PC-9 (cell line): ENCODE measurements at regions of chr22 and their contacts with region 1.

Region 1: DNA sequence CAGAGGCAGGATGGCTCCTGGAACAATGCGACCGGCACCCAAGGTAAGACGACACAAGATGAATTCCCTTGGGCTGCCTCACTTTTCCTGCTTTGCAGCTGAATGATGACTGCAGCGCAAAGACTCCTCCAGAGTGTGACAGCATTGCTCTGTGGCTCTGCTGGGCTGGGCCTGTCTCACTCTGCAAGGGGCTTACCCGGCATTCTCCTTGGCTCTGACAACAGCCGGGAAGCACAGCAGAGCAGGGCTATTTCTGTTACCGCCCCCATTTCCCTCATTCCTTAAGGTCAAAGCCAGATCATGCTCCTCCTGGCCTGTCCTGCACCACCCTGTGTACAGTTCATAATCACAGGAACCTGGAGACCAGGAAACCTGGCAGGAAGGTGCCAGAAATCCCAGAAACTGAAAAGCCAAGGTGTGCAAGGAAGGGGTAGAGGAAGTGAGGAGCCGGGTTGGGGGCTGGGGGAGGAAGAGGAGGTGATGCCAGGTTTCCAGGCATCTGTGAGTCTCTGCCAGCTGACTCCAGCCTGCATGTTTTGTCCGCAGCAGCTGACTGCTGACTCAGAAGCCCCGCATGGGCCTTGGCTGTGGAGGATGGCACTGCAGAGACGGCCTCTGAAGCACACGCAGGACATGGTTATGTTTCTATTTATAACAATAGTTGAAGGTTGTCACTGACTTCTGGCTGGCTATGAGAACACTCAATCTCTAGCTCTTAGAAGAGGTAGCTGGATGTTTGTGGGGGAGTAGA is 113.6 kb downstream of the MICAL3 start:
- DNase-seq: no peak
- H3K4me3 ChIP-seq: no peak overlapping the region
- H3K27ac ChIP-seq: no peak overlapping the region
- H3K4me1 ChIP-seq: no peaks in the 10 kb centered on the region
- H3K27me3 ChIP-seq: no peaks in the 10 kb centered on the region
- CTCF ChIP-seq: no peak

Region 2: DNA sequence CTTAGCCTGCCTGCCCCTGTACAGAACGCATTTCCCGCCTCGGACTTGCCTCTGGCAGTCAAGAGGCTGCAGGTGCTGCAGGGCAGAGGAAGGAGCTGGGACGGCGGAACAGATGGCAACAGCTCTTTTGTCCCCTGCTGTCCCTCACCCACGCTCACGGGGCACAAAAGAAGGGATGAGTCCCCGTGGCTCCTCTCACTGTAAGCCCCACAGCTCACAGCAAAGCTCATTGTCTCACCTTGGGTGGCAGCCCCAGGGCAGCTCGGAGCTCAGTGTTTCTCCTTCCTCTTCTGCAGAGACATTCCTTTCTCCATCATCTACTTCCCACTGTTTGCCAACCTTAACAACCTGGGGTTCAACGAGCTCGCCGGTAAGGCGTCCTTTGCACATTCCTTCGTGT is 323.1 kb before region 1 on chr22:
- CTCF ChIA-PET with region 1: no interaction called
- POLR2A ChIA-PET with region 1: interaction called, 13 read pairs
- intact Hi-C with region 1: no loop called
- DNase-seq: no peak
- H3K4me3 ChIP-seq: no peak overlapping the region
- H3K27ac ChIP-seq: no peak overlapping the region
- H3K4me1 ChIP-seq: no peaks in the 10 kb centered on the region
- H3K27me3 ChIP-seq: no peaks in the 10 kb centered on the region
- CTCF ChIP-seq: no peak

Region 3: GRCh38 chr22:17969701-17970113 is 59.0 kb after region 1 on chr22:
- CTCF ChIA-PET with region 1: no interaction called
- POLR2A ChIA-PET with region 1: no interaction called
- intact Hi-C with region 1: loop called (anchors 10 kb)
- DNase-seq: peak; percentile 45 to 65
- H3K4me3 ChIP-seq: no peak overlapping the region
- H3K27ac ChIP-seq: peak overlapping the region; percentile 9; the same call in 1 of the 2 replicates
- H3K4me1 ChIP-seq: peaks cover 50% of the 10 kb centered on the region
- H3K27me3 ChIP-seq: no peaks in the 10 kb centered on the region
- CTCF ChIP-seq: no peak